Colonic mucosa (tissue), 4 donors: ENCODE measurements at regions of chr9 and their contacts with region 1.

Region 1: GRCh38 chr9:35732122-35732799 is at the starts of genes CREB3 and TLN1:
- DNase-seq: peak; percentile 99
- H3K4me3 ChIP-seq: peak within 1 kb of the TSS; percentile 82
- H3K27ac ChIP-seq: peak within 1 kb of the TSS; percentile 97
- H3K4me1 ChIP-seq: peaks cover 19% of the 10 kb centered on the region
- H3K27me3 ChIP-seq: no peaks in the 10 kb centered on the region
- CTCF ChIP-seq: no peak
- total RNA-seq, gene CREB3: 47.9 to 50.8 TPM
- total RNA-seq, gene TLN1: 177 to 196 TPM

Region 2: GRCh38 chr9:35664531-35665470 is 67.5 kb before region 1 on chr9 and contains the start of gene ARHGEF39:
- intact Hi-C with region 1: loop called (anchors 5 kb)
- DNase-seq: peak; percentile 91
- H3K4me3 ChIP-seq: peak within 1 kb of the TSS; percentile 49
- H3K27ac ChIP-seq: peak within 1 kb of the TSS; percentile 42
- H3K4me1 ChIP-seq: peaks cover 17% of the 10 kb centered on the region
- H3K27me3 ChIP-seq: no peaks in the 10 kb centered on the region
- CTCF ChIP-seq: no peak
- total RNA-seq, gene ARHGEF39: 7.3 to 34.0 TPM